PC-9 (cell line): ENCODE measurements at regions of chr2 and their contacts with region 1.

Region 1: GRCh38 chr2:231557571-231558237 is 27.5 kb upstream of the NMUR1 start:
- DNase-seq: peak; percentile 42 to 54
- H3K4me3 ChIP-seq: no peak overlapping the region
- H3K27ac ChIP-seq: no peak overlapping the region
- H3K4me1 ChIP-seq: no peaks in the 10 kb centered on the region
- H3K27me3 ChIP-seq: peaks cover 4% of the 10 kb centered on the region; the same call in 1 of the 2 replicates
- CTCF ChIP-seq: peak; percentile 82

Region 2: DNA sequence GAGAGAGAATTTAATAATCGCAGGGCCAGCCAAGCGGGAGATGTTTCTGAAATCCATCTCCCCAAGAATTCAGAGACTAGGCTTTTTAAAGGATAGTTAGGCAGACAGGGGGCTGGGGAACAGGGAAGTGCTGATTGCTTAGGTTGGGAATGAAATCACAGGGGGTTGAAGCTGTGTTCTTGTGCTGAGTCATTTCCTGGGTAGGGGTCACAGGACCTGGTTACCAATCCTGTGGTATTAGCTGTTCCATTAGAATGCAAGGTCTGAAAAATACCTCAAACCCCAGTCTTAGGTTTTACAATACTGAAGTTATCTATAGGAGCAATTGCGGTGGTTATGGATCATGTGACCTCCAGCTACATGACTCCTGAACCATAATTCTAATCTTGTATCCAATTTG is 1327.6 kb before region 1 on chr2:
- CTCF ChIA-PET with region 1: no interaction called
- POLR2A ChIA-PET with region 1: no interaction called
- intact Hi-C with region 1: no loop called
- DNase-seq: no peak
- H3K4me3 ChIP-seq: no peak overlapping the region
- H3K27ac ChIP-seq: peak overlapping the region; percentile 37; the same call in 1 of the 2 replicates
- H3K4me1 ChIP-seq: peaks cover 14% of the 10 kb centered on the region
- H3K27me3 ChIP-seq: no peaks in the 10 kb centered on the region
- CTCF ChIP-seq: no peak

Region 3: DNA sequence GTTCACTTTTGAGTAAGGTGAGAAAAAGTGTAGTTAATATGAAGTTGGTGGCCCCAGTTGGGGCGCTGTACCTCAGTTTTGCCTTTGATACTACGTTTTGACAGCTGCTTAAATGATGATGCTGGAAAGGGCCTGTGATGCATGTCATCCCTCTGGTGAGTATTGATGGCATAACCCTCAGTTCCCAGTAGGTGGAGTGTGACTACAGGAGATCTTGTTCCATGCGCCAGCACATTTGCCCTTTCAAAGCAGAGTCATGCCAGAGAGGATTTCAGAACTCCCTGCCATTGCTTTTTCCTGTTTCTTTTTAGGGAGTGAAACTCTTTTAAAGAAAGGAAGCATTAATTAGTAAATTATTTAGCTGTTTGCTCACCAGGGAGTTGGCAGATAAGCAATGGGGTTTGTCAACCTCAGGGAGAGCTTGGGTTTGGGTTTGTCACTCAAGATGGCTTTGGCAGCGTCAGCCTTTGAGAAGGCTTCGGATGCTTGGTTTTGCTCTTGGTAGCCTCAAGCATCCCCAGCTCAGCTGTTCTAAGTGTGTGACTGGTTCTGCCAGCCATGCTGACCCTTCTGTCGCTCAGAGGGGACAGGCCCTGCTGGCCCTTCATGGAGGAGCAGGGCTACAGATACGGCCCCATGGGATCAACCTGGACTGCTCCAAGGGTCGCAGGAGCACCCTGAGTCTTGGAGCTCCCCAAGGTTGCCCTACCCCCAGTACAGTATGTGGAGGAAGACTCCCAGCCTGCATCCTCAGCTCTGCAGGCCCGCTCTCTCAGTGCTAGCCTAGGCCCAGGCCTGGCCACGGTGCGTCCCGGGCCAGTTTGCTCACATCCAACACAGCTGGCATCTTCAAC is 330.2 kb before region 1 on chr2:
- CTCF ChIA-PET with region 1: no interaction called
- POLR2A ChIA-PET with region 1: no interaction called
- intact Hi-C with region 1: loop called (anchors 10 kb)
- DNase-seq: peak; percentile 52 to 65
- H3K4me3 ChIP-seq: no peak overlapping the region
- H3K27ac ChIP-seq: no peak overlapping the region
- H3K4me1 ChIP-seq: no peaks in the 10 kb centered on the region
- H3K27me3 ChIP-seq: no peaks in the 10 kb centered on the region
- CTCF ChIP-seq: peak; percentile 86

Region 4: GRCh38 chr2:231482806-231483391 is 74.8 kb before region 1 on chr2:
- CTCF ChIA-PET with region 1: no interaction called
- POLR2A ChIA-PET with region 1: no interaction called
- intact Hi-C with region 1: loop called (anchors 1 kb)
- DNase-seq: peak in 1 of 2 experiments; percentile 68
- H3K4me3 ChIP-seq: peak overlapping the region; percentile 49; the same call in 1 of the 2 replicates
- H3K27ac ChIP-seq: no peak overlapping the region
- H3K4me1 ChIP-seq: no peaks in the 10 kb centered on the region
- H3K27me3 ChIP-seq: no peaks in the 10 kb centered on the region
- CTCF ChIP-seq: peak; percentile 77

Region 5: GRCh38 chr2:231514103-231514950 is 43.4 kb before region 1 on chr2:
- CTCF ChIA-PET with region 1: interaction called, 3 read pairs
- POLR2A ChIA-PET with region 1: no interaction called
- intact Hi-C with region 1: loop called (anchors 5 kb)
- DNase-seq: peak; percentile 85 to 98
- H3K4me3 ChIP-seq: peak overlapping the region; percentile 91
- H3K27ac ChIP-seq: peak overlapping the region; percentile 70
- H3K4me1 ChIP-seq: peaks cover 15% of the 10 kb centered on the region
- H3K27me3 ChIP-seq: no peaks in the 10 kb centered on the region
- CTCF ChIP-seq: no peak

Region 6: DNA sequence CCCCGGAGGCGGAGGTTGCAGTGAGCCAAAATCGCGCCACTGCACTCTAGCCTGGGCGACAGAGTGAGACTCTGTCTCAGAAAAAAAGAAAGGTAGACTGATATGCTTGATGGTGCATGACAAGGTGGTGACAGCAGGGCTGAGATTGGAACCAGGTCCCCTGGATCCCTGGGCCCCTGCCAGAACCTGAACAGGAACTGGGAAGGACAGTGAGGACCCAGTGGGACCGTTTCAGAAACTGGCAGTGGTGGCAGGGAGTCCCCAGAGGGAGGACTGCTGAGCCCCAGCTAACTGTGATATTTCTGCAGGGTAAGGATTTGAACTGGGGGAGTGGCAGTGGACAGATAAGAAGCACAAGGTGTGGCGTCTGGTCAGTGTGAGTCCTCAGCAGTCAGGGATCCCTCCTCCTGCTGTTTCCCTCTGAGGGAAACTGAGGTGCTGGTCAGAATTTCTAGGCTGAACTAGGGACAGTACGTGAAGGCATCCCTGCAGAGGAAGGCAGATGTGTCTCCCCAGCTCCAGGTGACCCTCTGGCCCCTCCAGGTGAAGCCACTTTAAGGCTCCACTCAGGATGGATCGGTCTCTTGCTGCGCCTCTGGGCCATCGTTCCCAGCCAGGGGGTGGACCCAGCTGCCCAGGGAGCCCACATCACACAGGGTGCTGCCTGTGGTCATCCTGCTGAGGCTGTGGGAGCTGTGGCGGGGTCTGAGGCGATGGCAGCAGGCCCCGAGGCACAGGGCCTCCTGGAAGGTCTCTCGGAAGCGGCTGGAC is 33.0 kb before region 1 on chr2:
- CTCF ChIA-PET with region 1: interaction called, 12 read pairs
- POLR2A ChIA-PET with region 1: no interaction called
- intact Hi-C with region 1: loop called (anchors 5 kb)
- DNase-seq: no peak
- H3K4me3 ChIP-seq: no peak overlapping the region
- H3K27ac ChIP-seq: no peak overlapping the region
- H3K4me1 ChIP-seq: no peaks in the 10 kb centered on the region
- H3K27me3 ChIP-seq: no peaks in the 10 kb centered on the region
- CTCF ChIP-seq: no peak

Region 7: DNA sequence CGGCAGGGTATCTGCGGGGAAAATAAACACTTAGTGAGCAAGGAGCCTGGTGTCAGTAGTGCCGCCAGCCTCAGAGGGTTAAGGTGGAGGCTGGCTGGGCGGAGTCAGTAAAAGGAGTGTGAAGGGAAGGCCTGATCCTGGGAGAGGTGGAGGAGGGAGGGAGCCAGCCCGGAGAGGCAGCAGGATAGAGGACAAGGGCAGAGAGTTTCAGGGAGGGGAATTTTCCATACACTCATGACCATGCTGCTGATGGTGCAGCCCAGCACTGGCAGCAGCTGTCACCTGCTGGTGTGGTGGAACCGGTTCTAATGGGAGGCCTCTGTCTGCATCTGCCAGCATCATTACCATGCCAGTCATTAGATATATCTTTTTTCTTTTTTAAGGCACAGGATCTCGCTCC is 32.9 kb after region 1 on chr2:
- CTCF ChIA-PET with region 1: no interaction called
- POLR2A ChIA-PET with region 1: interaction called, 21 read pairs
- intact Hi-C with region 1: no loop called
- DNase-seq: peak; percentile 43 to 44
- H3K4me3 ChIP-seq: no peak overlapping the region
- H3K27ac ChIP-seq: no peak overlapping the region
- H3K4me1 ChIP-seq: no peaks in the 10 kb centered on the region; the same call in 1 of the 2 replicates
- H3K27me3 ChIP-seq: no peaks in the 10 kb centered on the region
- CTCF ChIP-seq: no peak